HEK293T (cell line): ENCODE measurements at regions of chr17 and their contacts with region 1.

Region 1: GRCh38 chr17:50026901-50027630 is 28.8 kb upstream of the ITGA3 start:
- DNase-seq: peak; percentile 89

Region 2: DNA sequence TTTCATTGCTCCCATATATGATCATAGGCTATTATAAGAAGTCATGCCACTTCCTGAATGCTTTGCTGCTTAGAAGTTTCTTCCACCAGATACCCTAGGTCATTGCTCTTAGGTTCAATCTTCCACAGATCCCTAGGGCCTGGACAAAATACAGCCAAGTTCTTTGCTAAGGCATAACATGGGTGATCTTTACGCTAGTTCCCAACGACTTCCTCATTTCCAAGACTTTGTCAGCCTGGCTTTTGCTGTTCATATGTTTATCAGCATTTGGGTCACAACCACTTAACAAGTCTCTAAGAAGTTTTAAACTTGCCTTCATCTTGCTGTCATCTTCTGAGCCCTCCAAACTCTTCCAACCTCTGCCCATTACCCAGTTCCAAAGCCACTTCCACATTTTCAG is 11.9 kb before region 1 on chr17:
- CTCF ChIA-PET with region 1: no interaction called
- POLR2A ChIA-PET with region 1: no interaction called
- DNase-seq: no peak

Region 3: DNA sequence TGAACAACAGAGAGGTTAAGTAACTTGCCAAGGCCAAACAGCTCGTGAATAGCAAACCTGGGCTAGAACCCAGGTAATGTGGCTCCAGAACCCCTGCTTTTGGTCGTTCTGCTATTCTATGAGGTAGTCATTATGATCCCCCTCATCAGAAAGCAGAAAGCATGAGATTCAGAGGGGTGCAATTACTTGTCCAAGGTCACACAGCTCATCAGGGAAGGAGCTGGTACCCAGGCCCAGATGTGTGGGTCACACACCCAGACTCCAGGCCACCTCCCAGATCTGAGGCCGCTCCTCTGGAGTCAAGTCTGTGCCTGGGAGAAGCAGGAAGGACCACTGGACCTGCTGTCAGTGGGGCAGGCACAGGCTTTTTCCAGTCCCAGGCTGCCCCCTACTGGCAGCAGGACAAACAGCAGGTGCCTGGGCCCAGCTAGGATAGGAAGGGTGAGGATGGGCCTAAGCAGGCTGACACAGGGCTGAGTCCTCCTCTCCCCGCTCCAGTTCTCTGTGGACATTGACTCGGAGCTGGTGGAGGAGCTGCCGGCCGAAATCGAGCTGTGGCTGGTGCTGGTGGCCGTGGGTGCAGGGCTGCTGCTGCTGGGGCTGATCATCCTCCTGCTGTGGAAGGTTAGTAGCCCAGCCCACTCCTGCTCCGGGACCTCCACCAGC is 60.3 kb after region 1 on chr17:
- CTCF ChIA-PET with region 1: interaction called, 24 read pairs
- POLR2A ChIA-PET with region 1: no interaction called
- DNase-seq: peak; percentile 86